T-cell (primary cell): ENCODE measurements at regions of chr12 and their contacts with region 1.

Region 1: DNA sequence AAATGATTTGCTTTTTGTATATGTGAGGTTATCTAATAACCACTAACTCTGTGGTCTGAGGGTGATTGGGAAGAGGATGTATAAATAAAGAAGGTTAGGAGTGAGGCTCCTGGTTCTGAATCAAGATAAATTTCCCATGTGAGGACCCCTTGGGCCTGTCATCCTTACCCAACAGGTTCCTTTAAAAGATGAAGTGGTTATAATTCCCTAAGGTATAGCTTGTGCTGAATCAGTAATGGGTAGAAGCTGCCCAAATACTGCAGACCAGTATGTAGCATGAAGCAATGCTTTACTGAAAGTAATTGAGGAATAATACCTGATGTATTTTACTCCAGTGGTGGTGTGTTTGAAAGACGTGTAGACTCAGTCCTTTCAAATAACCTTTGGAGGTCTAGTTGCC is 8.7 kb downstream of the EID3 start:
- DNase-seq: no peak
- ATAC-seq: no peak
- H3K4me3 ChIP-seq: no peak overlapping the region
- H3K4me3 Mint-ChIP-seq: no peak overlapping the region
- H3K27ac ChIP-seq: no peak overlapping the region
- H3K27ac Mint-ChIP-seq: no peak overlapping the region
- H3K4me1 ChIP-seq: peaks cover 0 to 2% of the 10 kb centered on the region in 2 experiments
- H3K4me1 Mint-ChIP-seq: peaks cover 9 to 14% (median 14%) of the 10 kb centered on the region in 3 donors
- H3K27me3 ChIP-seq: no peaks in the 10 kb centered on the region
- H3K27me3 Mint-ChIP-seq: no peaks in the 10 kb centered on the region

Region 2: DNA sequence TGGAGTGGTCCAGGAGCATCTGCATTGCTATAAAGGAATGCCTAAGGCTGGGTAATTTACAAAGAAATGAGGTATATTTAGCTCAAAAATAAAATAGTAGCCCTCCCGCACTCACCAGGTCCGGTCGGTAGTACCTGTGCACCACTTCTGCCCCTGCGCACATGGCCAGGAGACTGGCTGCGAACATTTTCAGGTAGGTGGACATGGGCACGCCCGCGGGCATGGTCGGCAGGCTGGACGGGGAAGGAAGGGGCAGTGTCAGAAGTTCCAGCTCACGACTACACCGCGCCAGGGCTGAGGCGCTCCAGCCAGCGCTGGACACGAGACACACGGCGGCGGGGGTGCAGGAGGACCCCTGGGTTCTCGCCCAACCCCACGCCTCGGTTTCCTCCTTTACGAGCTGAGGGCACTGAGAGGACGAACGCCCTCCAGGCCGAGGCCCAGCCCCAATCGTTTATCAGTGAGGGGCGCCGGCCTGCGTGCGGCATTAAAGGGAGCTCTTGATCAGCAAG is 355.6 kb before region 1 on chr12:
- CTCF ChIA-PET with region 1: no interaction called
- POLR2A ChIA-PET with region 1: interaction called in 1 of 2 experiments, 12 read pairs
- DNase-seq: peak in 3 of 35 experiments; percentile 2 to 11 (median 5)
- ATAC-seq: peak in 3 of 4 experiments; percentile 6 to 8 (median 7)
- H3K4me3 ChIP-seq: peak overlapping the region; percentile 72 to 87
- H3K4me3 Mint-ChIP-seq: peak overlapping the region; percentile 97 to 98 (median 98)
- H3K27ac ChIP-seq: peak overlapping the region; percentile 72
- H3K27ac Mint-ChIP-seq: peak overlapping the region; percentile 98 to 99
- H3K4me1 ChIP-seq: peaks cover 4 to 21% of the 10 kb centered on the region in 2 experiments
- H3K4me1 Mint-ChIP-seq: peaks cover 37 to 47% (median 44%) of the 10 kb centered on the region in 3 donors
- H3K27me3 ChIP-seq: no peaks in the 10 kb centered on the region
- H3K27me3 Mint-ChIP-seq: no peaks in the 10 kb centered on the region